MCF 10A (cell line): ENCODE measurements at regions of chr20 and their contacts with region 1.

Region 1: DNA sequence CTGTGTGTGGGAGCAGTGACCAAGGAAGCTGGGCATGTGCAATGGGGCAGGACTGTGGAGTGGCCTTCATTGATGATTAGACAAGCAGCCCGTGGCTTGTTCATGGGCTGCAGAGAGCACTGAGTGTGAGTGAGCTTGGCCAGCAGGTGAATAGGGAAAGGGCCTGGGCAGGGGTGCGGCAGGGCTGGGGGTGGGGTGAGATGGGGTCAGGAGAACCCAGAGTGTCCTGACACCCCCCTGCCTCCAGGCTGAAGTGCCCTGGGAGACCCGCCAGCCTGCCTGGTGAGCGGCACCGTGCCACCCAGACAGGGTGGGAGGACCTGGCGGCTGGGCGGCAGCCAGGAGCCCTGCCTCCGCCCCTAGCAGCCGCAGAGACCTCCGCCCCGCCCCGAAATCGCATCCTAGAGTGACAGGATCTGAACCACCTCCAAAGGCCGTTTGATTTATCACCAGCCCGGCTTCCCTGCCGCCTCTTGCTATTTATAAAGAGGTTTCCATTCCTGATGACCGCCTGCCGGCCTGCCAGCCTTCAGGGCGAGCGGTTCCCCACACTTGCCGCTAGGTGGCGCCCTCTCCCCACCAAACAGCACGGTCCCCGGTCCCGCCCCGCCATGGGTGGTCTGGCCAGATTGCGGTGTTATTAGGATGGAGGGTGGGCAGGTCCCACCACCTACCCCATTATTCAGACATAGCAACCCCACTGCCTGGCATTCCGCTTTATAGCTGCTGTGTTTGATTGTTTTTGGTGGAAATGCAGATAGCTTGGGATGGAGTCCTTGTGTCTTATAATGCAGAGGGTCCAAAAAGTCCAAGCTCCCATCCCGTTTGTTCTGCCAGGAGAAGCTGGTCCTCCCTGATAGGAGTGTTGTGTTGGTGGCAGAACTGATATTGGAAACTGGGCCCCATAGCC is 3.5 kb downstream of the MYLK2 start:
- DNase-seq: peak; percentile 70
- H3K4me3 Mint-ChIP-seq: no peak overlapping the region
- H3K27ac Mint-ChIP-seq: no peak overlapping the region
- H3K4me1 Mint-ChIP-seq: no peaks in the 10 kb centered on the region
- H3K27me3 Mint-ChIP-seq: no peaks in the 10 kb centered on the region
- CTCF ChIP-seq: peak; percentile 99

Region 2: DNA sequence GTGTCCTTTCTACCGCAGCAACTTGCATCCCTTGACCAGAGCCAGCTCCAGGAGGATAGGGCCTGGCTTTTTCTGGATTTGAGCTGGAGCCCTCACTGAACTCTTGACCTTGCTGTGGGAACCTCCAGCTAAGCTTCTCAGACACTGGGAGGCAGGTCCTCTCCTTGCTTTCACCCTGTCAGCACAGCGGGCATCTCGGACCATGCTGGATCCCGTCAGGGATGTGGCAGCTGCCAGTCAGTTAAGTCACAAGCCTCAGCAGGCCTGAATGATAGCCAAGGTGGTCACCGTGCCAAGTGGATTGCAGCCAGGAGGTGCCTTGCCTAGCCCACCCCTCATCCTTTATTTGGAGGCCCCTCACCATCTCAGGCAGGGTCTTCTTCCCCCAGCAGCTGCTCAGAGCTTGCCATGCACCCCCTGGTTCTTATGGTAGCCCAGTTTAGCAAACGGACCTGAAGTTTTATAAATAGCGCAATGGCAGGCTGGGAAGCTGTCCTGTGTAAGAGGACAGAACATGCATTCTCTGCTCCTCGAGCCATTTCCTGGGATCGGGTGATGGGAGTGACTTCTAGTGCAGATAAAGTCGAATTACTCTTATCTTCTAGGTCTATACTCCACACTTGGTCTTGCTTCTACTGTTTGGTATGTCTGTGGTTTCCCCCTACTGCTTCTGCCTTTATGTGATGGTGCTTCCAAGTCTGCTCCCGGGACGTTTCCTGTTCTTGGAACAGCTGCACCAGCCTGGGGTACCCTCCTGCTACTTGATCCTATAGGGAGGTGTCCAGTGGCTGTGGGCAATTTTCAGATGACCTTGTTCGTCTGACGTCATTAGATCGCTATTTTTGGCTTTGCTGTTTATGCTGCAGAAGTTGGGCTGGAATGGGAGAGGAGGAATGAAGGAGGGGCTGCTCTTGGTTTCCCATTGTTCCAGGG is 10.6 kb before region 1 on chr20:
- CTCF ChIA-PET with region 1: interaction called, 30 read pairs
- POLR2A ChIA-PET with region 1: interaction called, 3 read pairs
- intact Hi-C with region 1: no loop called
- DNase-seq: no peak
- H3K4me3 Mint-ChIP-seq: no peak overlapping the region
- H3K27ac Mint-ChIP-seq: no peak overlapping the region
- H3K4me1 Mint-ChIP-seq: no peaks in the 10 kb centered on the region
- H3K27me3 Mint-ChIP-seq: no peaks in the 10 kb centered on the region
- CTCF ChIP-seq: no peak

Region 3: DNA sequence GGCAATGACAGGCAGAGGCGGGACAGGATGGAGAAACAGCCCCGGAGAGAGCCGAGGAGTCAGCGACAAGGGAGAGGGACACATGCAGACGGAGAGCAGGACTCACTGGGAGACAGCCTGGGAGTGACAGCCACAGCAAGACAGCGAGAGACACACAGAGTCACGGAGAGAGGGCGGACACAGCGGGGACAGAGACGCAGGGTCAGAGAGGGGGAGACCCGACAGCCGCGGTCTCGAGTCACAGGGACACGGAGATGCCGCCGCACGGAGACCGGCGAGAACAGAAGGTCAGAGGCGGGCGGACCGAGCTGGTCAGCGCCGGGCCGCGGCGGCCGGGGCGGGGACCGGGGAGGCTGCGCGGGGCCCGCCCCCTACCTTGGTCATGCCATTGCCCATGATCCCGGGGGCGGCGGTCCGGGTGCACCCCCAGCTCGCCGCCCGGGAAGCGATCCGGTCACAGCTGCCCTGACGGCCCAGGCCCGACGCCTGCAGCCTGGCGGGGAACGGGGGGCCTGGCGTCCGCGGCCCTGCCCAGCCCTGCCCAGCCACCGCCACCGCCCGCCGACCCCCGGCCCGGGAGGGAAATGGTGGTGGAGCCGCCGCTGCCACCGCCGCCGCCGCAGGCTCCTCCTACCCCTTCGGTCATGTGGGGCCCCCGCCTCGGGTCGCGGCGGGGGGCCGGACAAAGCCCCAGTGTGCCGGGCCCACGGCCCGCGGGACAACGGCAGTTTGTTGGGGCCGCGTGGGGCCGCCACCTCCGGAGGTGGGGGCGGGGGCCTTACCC is 47.5 kb after region 1 on chr20 and contains the starts of genes DUSP15 and TTLL9:
- CTCF ChIA-PET with region 1: interaction called, 12 read pairs
- POLR2A ChIA-PET with region 1: no interaction called
- intact Hi-C with region 1: no loop called
- DNase-seq: no peak
- H3K4me3 Mint-ChIP-seq: peak within 1 kb of the TSS; percentile 77
- H3K27ac Mint-ChIP-seq: peak within 1 kb of the TSS; percentile 81
- H3K4me1 Mint-ChIP-seq: peaks cover 7% of the 10 kb centered on the region
- H3K27me3 Mint-ChIP-seq: peaks cover 67% of the 10 kb centered on the region
- CTCF ChIP-seq: no peak
- total RNA-seq, gene DUSP15: not detected in 2 replicates
- total RNA-seq, gene TTLL9: 0.19 TPM in 1 of 2 replicates, not detected in the other

Region 4: GRCh38 chr20:32040142-32041022 is 217.7 kb after region 1 on chr20:
- CTCF ChIA-PET with region 1: interaction called, 15 read pairs
- POLR2A ChIA-PET with region 1: no interaction called
- intact Hi-C with region 1: no loop called
- DNase-seq: no peak
- H3K4me3 Mint-ChIP-seq: no peak overlapping the region
- H3K27ac Mint-ChIP-seq: no peak overlapping the region
- H3K4me1 Mint-ChIP-seq: peaks cover 15% of the 10 kb centered on the region
- H3K27me3 Mint-ChIP-seq: peaks cover 74% of the 10 kb centered on the region
- CTCF ChIP-seq: no peak